Right ventricle myocardium inferior (tissue), 1 donor: ENCODE measurements at regions of chr10 and their contacts with region 1.

Region 1: GRCh38 chr10:37976091-37976879 is at the start of gene ZNF25:
- DNase-seq: peak; percentile 99
- ATAC-seq: peak; percentile 98
- total RNA-seq, gene ZNF25: 16.7 TPM

Region 2: DNA sequence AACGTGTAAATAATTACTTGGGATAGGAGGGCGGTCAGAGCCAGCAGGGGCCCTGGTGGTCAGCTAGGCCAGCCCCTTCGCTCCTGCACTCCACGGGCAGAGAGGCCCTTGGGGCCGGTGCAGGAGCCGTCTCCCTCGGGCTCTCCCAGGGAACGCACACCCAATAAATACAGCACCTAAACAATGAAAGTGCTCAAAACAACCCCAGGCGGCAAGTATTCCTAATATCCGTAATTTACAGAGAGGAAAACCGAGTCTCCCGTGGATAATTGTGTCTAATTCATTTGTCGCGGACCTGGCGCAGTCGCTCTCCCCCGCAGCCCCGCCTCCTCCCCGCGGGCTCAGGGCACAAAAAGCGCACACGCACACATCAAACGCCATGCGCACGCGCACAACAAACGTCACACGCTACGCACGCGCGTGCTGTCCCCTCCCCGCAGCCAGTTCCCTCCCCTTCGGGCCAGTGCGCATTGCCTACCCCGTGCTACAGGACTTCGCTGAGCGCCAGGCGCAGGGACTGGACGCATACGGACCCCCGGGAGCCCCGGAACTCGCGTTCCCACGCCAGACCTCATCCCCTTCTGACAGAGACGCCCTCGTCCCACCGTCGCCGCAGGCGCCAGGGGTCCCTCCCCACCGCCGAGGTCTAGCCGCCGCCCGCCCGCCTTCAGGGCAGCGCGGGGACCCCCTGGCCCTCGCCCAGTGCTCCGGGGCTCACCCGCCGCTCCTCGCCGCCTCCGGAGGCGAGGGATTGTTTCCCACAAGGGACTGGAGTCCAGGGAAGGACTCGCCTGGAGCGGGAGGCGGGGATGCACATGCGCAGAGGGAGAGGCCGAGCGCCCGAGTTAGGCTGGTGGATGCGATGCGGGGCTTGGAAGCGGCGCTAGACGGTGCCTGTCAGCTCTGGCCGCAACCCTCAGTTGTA is 118.7 kb before region 1 on chr10 and contains the start of gene ZNF248:
- intact Hi-C with region 1: loop called (anchors 2 kb)
- DNase-seq: peak; percentile 99
- ATAC-seq: peak; percentile 99
- total RNA-seq, gene ZNF248: 13.2 TPM

Region 3: GRCh38 chr10:38010119-38010903 is 34.0 kb after region 1 on chr10 and contains the start of gene ZNF33A:
- intact Hi-C with region 1: loop called (anchors 2 kb)
- DNase-seq: peak; percentile 93
- ATAC-seq: peak; percentile 95
- total RNA-seq, gene ZNF33A: 21.2 TPM